ENCODE measurements at regions of chr3 and their contacts with region 1.

Region 1: DNA sequence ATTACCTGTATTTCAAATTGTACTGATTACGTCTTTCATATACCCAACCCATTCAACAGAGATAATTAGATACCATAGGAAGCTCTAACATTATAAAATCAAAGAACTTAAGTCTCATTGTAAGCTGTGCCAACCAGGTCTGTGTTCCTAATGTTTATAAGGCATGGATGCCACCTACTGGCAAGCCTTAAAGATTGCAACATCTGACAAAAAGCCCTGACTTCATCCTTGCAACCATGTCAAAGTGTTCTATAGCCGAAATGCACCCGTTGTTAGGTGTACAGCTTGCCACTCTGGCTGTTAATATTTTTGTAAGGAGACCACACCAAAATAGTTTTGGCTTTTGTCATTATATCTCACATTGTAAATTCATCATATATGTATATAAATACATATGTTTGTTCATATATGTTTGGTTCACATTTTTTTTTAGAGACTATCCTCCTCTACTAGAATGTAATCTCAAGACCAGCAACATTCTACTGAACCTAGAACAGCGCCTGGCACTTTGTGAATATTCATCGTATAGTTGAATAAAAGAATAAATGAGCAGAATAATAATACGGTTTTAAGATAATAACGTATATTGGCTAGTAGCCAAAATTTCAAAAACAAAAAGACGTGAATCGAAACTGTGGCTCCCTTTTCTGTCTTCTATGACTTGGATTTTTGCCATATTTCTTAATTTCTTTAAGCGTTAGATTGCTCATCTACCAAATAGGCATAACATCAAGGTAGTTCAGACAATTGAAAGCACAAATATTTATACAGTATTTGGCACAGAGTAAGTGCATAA is 258.1 kb downstream of the TBL1XR1 start:
- DNase-seq: peak; percentile 34 to 44
- ATAC-seq: peak; percentile 98 to 99
- H3K4me3 ChIP-seq: no peak overlapping the region
- H3K27ac ChIP-seq: no peak overlapping the region
- H3K4me1 ChIP-seq: no peaks in the 10 kb centered on the region
- H3K27me3 ChIP-seq: no peaks in the 10 kb centered on the region
- CTCF ChIP-seq: peak; percentile 49 to 75 (median 67)
- POLR2A ChIP-seq: no peak

Region 2: GRCh38 chr3:175729466-175729865 is 1209.8 kb before region 1 on chr3:
- in situ Hi-C with region 1: no loop called
- intact Hi-C with region 1: no loop called
- DNase-seq: no peak
- ATAC-seq: no peak
- H3K4me3 ChIP-seq: no peak overlapping the region
- H3K27ac ChIP-seq: no peak overlapping the region
- H3K4me1 ChIP-seq: no peaks in the 10 kb centered on the region
- H3K27me3 ChIP-seq: no peaks in the 10 kb centered on the region
- CTCF ChIP-seq: no peak
- POLR2A ChIP-seq: no peak

Region 3: GRCh38 chr3:176734146-176734545 is 205.1 kb before region 1 on chr3:
- in situ Hi-C with region 1: no loop called
- intact Hi-C with region 1: no loop called
- DNase-seq: no peak
- ATAC-seq: no peak
- H3K4me3 ChIP-seq: no peak overlapping the region
- H3K27ac ChIP-seq: no peak overlapping the region
- H3K4me1 ChIP-seq: no peaks in the 10 kb centered on the region
- H3K27me3 ChIP-seq: no peaks in the 10 kb centered on the region
- CTCF ChIP-seq: no peak
- POLR2A ChIP-seq: no peak

Region 4: DNA sequence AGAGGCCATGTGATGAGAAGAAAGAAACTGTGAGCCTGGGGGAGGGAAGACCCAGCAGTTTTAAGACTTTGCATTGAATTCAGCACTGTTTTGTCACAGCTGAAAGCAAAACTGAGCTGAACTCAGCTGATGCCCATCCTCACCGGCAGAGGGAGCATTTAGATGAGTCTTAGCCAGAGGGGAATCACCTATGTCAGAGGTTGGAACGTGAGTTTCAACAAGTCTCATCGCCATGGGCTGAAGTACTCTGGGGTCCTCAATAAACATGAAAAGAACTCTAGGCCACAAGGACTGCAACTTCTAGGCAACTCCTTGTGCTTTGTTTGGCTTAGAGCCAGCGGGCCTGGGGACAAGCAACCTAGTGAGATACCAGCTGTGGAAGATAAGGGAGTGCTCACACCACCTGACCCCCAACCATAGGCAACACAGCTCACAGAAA is 66.4 kb before region 1 on chr3:
- in situ Hi-C with region 1: loop called in 1 of 4 experiments (anchors 10 kb)
- intact Hi-C with region 1: loop called (anchors 1 kb)
- DNase-seq: peak in 1 of 2 donors; percentile 24
- ATAC-seq: peak; percentile 68 to 86
- H3K4me3 ChIP-seq: no peak overlapping the region
- H3K27ac ChIP-seq: no peak overlapping the region
- H3K4me1 ChIP-seq: no peaks in the 10 kb centered on the region
- H3K27me3 ChIP-seq: no peaks in the 10 kb centered on the region
- CTCF ChIP-seq: peak; percentile 56 to 69 (median 62)
- POLR2A ChIP-seq: no peak